ENCODE measurements at regions of chr2 and their contacts with region 1.

Region 1: GRCh38 chr2:160109936-160110673 is 47.7 kb upstream of the PLA2R1 start:
- DNase-seq: peak; percentile 54
- ATAC-seq: peak; percentile 84

Region 2: GRCh38 chr2:159855557-159856061 is 254.5 kb before region 1 on chr2:
- intact Hi-C with region 1: no loop called
- DNase-seq: no peak
- ATAC-seq: no peak

Region 3: DNA sequence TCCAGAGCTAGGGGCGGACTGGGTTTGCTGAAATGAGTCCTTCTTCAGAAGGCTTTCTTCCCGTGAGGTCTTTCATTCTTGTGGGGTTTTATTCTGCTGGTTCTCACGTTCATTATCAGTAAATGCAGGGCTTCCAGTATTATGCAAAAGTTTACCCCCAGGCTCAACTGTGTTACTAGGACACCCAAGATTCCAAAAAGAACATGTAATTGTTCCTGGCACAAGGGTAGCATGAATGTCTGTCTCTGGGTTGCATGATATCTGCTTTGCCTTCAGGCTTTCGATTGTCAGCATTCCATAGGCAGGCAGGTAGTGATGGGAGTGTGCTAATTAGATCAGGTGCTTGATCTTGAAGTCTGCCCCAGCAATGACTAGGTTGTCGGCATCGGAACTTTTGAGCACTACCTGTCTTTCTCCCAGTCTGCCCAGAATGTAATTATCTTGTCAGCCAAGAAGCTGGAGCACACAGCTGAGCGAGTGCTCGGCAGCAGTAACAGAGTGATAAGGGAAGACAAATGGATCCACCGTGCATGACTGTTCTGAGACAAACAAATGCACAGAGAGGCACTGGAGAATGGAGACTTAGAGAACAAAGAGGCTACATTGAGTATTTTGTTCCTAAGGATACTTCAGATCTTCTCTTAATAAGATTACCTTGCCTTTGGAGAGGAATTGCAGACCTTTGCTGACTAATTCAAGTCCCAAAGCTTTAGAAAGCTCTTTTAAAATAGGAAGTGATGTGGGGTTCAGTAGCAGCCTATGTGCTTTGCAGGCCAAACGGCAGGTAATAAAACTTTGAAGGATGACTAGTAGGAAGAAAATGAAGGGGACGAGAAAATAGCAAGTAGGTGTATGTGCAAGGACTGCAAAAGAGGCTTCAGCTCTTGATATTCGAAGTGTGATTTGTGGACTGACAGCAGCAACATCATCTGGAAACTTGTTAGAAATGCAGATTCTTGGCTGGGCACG is 48.0 kb after region 1 on chr2:
- intact Hi-C with region 1: no loop called
- DNase-seq: no peak
- ATAC-seq: no peak

Region 4: DNA sequence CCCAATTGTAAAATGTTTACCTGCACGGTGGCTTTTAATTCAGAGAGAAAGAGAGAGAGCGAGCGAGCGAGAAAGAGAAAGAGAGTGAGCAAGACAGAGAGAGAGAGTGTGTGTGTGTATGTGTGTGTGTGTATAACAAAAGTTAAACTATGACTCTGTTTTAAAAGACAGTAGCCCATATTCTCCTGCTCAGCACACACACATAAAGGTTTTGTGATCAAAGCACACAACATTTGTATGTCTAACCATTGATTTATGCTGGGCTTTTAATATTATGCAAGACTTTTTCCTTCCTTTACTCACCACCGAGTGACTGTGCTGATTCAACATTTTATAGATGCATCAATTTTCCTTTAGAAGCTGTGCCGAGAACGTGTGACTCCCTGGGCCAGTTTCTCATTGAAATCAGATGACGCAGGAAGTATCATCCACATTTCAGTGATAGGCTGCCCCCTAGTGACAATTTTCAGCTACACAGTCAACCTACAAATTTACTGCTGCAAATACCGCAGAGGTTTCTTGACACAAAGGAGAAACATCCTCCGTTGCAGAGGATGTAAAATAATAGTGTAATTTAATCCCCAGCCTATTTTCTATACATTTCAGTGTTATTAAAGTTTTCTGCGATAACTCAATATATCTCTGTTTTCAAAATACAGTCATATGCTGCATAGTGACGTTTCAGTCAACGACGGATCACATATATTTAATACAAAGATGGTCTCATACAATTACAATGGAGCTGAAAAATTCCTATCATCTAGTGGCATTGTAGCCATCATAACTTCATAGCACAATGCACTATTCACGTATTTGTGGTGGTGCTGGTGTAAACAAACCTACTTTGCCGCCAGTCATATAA is 884.3 kb after region 1 on chr2:
- intact Hi-C with region 1: loop called in 1 of 2 experiments (anchors 5 kb)
- DNase-seq: peak; percentile 50 to 62
- ATAC-seq: peak; percentile 71

Region 5: DNA sequence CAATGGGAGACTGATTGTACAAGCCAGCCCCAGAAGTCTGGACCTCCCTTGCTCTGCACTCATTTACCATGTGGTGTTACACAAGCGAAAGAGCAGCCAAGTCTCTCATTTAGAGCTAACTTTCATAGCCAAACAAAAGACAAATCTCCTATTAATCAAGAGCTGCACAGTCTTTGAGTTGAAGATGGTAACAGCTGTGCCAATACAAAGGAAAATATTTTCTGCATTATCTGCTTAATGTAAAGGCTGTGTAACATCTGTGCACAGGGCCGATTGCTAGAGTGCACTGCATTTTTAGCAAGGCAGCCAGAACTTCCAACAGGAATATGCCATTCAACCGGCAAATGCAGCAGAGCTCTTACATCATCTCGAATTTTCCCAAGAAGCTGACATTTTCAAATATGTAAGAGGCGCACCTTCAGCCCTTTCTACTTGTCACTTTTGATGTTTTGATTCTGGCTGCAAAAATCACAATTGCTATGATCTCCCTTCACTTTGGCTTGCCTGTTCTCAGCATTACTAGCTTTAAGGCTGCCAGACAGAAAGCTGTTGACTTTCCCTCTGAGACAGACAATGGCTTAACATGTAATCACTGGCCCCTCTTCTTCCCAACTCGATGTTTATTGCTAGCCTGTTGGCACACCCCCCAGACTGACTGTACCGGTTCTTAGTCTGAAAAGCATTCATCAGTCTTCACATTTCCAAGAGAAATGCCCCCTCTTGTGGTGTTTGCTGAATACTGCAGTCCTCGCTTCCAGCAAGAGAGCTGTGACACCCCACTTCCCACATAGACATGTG is 953.3 kb after region 1 on chr2:
- intact Hi-C with region 1: loop called in 1 of 2 experiments (anchors 10 kb)
- DNase-seq: peak; percentile 66 to 69
- ATAC-seq: peak; percentile 78

Measured in left colon (tissue), 2 donors.